Right cardiac atrium (tissue), 5 donors: ENCODE measurements at regions of chr3 and their contacts with region 1.

Region 1: GRCh38 chr3:188845514-188845913 is 326.3 kb upstream of the TPRG1 start:
- DNase-seq: no peak
- ATAC-seq: no peak
- H3K4me3 ChIP-seq: no peak overlapping the region
- H3K27ac ChIP-seq: no peak overlapping the region
- H3K4me1 ChIP-seq: peaks cover 2% of the 10 kb centered on the region
- H3K27me3 ChIP-seq: no peaks in the 10 kb centered on the region

Region 2: DNA sequence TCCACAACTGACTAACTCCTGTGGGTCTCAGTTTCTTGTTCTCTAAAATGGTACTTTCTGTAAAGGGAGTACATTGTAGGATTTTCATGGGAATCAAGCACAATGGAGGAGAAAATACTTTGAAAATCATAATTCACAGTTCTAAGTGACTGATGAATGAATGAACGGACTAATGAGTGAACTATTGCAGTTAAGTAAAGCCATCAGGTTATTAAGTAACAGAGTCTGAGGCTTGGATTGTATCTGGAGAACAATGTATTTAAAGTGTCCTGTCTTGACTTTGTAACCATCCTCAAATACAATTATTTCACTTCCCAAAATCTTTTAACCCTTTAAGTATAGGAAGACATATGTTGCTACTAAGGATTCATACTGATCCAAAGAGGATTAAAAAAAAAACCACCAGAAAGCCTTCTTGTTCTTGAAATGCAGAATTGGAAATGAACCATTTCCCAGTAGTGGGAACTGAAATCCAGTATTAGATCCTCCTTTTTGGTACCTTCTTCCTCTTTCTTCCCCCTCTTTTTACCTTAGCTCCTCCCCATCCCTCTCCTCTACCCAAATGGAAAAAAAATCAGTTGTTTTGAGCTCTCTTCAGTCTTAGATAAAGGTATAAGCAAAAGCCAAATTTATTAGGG is 1087.1 kb before region 1 on chr3:
- intact Hi-C with region 1: no loop called
- DNase-seq: no peak
- ATAC-seq: no peak
- H3K4me3 ChIP-seq: no peak overlapping the region
- H3K27ac ChIP-seq: no peak overlapping the region
- H3K4me1 ChIP-seq: no peaks in the 10 kb centered on the region
- H3K27me3 ChIP-seq: no peaks in the 10 kb centered on the region

Region 3: GRCh38 chr3:188900421-188900951 is 55.0 kb after region 1 on chr3:
- intact Hi-C with region 1: loop called in 1 of 4 experiments (anchors 2 kb)
- DNase-seq: no peak
- ATAC-seq: peak; percentile 78 to 93
- H3K4me3 ChIP-seq: no peak overlapping the region
- H3K27ac ChIP-seq: no peak overlapping the region
- H3K4me1 ChIP-seq: peaks cover 8% of the 10 kb centered on the region
- H3K27me3 ChIP-seq: no peaks in the 10 kb centered on the region